ENCODE measurements at regions of chr15 and their contacts with region 1.

Region 1: GRCh38 chr15:73081321-73081958 is 29.2 kb downstream of the NEO1 start:
- DNase-seq: peak; percentile 8 to 51 (median 10)
- ATAC-seq: peak; percentile 46; the same call in 1 of the 3 replicates
- H3K4me3 ChIP-seq: no peak overlapping the region
- H3K27ac ChIP-seq: no peak overlapping the region
- H3K4me1 ChIP-seq: no peaks in the 10 kb centered on the region
- H3K27me3 ChIP-seq: no peaks in the 10 kb centered on the region
- CTCF ChIP-seq: peak; percentile 40 to 71 (median 52); a peak in 4 of 6 replicates
- EP300 ChIP-seq: no peak
- POLR2A ChIP-seq: no peak
- RAD21 ChIP-seq: peak; percentile 62 to 78

Region 2: GRCh38 chr15:72722071-72722696 is 359.3 kb before region 1 on chr15:
- CTCF ChIA-PET with region 1: interaction called, 4 read pairs
- POLR2A ChIA-PET with region 1: no interaction called
- in situ Hi-C with region 1: no loop called
- intact Hi-C with region 1: loop called (anchors 2 kb)
- DNase-seq: peak; percentile 21 to 73 (median 40)
- ATAC-seq: peak; percentile 79
- H3K4me3 ChIP-seq: no peak overlapping the region
- H3K27ac ChIP-seq: no peak overlapping the region
- H3K4me1 ChIP-seq: no peaks in the 10 kb centered on the region
- H3K27me3 ChIP-seq: no peaks in the 10 kb centered on the region
- CTCF ChIP-seq: peak; percentile 64 to 83 (median 78)
- EP300 ChIP-seq: no peak
- POLR2A ChIP-seq: no peak
- RAD21 ChIP-seq: peak; percentile 43 to 70

Region 3: DNA sequence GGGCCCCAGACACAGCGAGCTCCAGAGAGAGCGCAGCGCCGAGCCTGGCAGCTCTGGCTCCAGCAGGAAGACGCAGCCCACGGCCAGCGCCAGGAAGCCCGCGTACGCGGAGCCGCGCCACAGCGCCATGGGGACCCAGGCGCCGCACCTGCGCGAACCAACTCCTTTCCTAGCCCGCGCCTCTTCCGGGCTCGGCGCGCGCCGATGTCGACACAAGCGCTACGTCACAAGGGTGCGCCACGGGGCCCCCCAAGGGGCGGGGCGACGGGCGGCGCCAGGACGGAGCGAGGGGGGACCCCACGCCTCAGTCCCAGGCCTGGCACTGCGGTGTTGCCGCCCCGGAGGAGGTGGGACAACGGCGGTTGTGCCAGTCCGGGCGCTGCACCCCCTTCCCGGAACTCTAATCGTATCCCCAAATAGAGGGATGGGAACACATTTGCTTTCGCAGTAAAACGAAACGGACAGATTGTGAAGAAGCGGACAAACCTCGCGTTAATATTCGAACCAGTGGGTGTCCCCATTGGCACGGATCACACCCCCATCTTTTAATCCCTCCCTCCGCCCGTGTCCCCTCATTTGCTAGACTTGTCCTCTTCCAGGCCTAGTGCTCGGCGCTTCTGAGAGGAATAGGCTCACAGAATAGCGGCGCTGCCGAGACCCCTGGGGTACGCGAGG is 297.7 kb before region 1 on chr15 and contains the start of gene ADPGK:
- CTCF ChIA-PET with region 1: no interaction called
- POLR2A ChIA-PET with region 1: no interaction called
- in situ Hi-C with region 1: loop called (anchors 10 kb)
- intact Hi-C with region 1: loop called (anchors 5 kb)
- DNase-seq: peak; percentile 93 to 98 (median 98)
- ATAC-seq: peak; percentile 91
- H3K4me3 ChIP-seq: peak within 1 kb of the TSS; percentile 98
- H3K27ac ChIP-seq: peak within 1 kb of the TSS; percentile 92
- H3K4me1 ChIP-seq: peaks cover 11 to 13% of the 10 kb centered on the region in 2 experiments; a peak in 4 of 5 replicates
- H3K27me3 ChIP-seq: no peaks in the 10 kb centered on the region
- CTCF ChIP-seq: no peak
- EP300 ChIP-seq: peak; percentile 59
- POLR2A ChIP-seq: peak; percentile 92
- RAD21 ChIP-seq: no peak
- polyA plus RNA-seq, gene ADPGK: 13.4 to 16.0 TPM

Region 4: DNA sequence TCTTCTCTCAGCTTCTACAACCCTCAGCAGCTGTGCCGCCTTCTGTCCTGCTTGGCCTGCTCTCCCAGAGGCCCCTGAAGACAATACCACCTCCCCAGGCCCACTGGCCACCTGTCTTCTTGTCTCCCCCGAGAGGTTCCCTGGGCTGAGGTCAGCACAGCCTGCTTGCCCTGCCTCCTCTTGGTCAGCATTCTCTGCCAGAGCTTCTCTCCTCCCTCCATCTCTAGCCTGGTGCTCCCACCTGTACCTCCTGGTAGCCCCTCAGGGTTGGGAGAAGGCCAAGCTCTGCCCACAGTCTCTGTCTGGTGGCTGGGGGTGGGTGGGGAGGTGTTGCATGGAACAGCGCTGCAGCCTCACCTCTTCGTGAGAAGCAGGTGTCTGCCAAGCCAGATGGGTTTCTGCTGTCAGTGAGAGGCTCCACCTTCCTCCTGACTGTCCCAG is 1086.5 kb after region 1 on chr15:
- CTCF ChIA-PET with region 1: no interaction called
- POLR2A ChIA-PET with region 1: no interaction called
- in situ Hi-C with region 1: no loop called
- intact Hi-C with region 1: no loop called
- DNase-seq: no peak
- ATAC-seq: no peak
- H3K4me3 ChIP-seq: no peak overlapping the region
- H3K27ac ChIP-seq: no peak overlapping the region
- H3K4me1 ChIP-seq: peaks cover 0 to 3% of the 10 kb centered on the region in 2 experiments; a peak in 2 of 5 replicates
- H3K27me3 ChIP-seq: peaks cover 8 to 47% of the 10 kb centered on the region in 2 experiments; a peak in 4 of 5 replicates
- CTCF ChIP-seq: no peak
- EP300 ChIP-seq: no peak
- POLR2A ChIP-seq: no peak
- RAD21 ChIP-seq: no peak